ENCODE measurements at regions of chr12 and their contacts with region 1.

Region 1: DNA sequence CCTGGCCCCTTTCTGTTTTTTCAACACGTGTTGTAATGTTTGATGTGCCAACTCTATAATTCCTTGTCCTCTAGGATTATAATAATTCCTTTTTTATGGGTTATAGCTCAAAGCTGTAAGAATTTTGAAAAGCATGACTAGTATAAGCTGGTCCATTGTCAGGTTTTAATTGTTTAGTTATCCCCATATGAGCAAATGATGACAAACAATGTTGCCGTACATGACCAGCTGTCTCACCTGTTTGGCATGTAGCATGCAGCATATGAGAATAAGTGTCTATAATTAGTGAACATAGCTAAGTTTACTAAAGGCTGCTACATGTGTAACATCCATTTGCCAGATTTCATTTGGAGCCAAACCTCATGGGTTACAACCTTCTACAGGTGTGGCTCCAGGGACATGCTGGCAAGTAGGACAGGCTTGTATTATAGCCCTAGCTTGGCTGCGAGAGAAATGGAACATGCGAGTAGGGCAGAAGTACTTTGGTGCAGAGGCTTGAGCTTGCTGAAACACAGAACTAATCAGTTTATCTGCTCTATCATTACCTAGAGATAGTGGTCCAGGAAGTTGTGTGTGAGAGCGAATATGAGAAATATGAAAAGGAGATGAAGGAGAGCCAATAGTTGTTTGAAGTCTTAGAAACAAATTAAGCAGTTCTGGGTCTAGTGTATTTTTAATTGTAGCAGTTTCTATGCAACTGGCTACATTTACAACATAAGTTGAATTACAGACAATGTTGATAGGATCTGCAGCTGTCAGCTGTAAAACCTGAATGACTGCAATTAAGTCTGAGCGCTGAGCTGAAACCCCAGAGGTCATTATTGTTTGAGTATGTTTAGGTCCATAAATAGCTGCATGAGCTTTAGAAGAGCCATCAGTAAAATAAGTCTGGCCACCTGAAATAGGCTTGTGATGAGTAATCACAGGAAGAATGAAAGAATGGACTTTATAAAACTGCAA is 22.6 kb upstream of the MAPKAPK5 start:
- DNase-seq: no peak
- ATAC-seq: no peak
- H3K4me3 ChIP-seq: no peak overlapping the region
- H3K27ac ChIP-seq: no peak overlapping the region
- H3K4me1 ChIP-seq: peaks cover 0 to 3% of the 10 kb centered on the region in 2 experiments; a peak in 1 of 5 replicates
- H3K27me3 ChIP-seq: peaks cover 0 to 10% of the 10 kb centered on the region in 2 experiments; a peak in 4 of 5 replicates
- CTCF ChIP-seq: no peak
- EP300 ChIP-seq: no peak
- POLR2A ChIP-seq: no peak
- RAD21 ChIP-seq: no peak

Region 2: GRCh38 chr12:111905502-111905901 is 86.0 kb after region 1 on chr12:
- CTCF ChIA-PET with region 1: no interaction called
- POLR2A ChIA-PET with region 1: no interaction called
- in situ Hi-C with region 1: no loop called
- intact Hi-C with region 1: loop called (anchors 10 kb)
- DNase-seq: no peak
- ATAC-seq: no peak
- H3K4me3 ChIP-seq: no peak overlapping the region
- H3K27ac ChIP-seq: no peak overlapping the region
- H3K4me1 ChIP-seq: peaks cover 0 to 3% of the 10 kb centered on the region in 2 experiments; a peak in 2 of 5 replicates
- H3K27me3 ChIP-seq: no peaks in the 10 kb centered on the region
- CTCF ChIP-seq: no peak
- EP300 ChIP-seq: no peak
- POLR2A ChIP-seq: no peak
- RAD21 ChIP-seq: no peak

Region 3: GRCh38 chr12:111942557-111942956 is 123.1 kb after region 1 on chr12:
- CTCF ChIA-PET with region 1: no interaction called
- POLR2A ChIA-PET with region 1: no interaction called
- in situ Hi-C with region 1: no loop called
- intact Hi-C with region 1: loop called (anchors 5 kb)
- DNase-seq: no peak
- ATAC-seq: no peak
- H3K4me3 ChIP-seq: no peak overlapping the region
- H3K27ac ChIP-seq: no peak overlapping the region
- H3K4me1 ChIP-seq: peaks cover 0 to 3% of the 10 kb centered on the region in 2 experiments; a peak in 1 of 5 replicates
- H3K27me3 ChIP-seq: no peaks in the 10 kb centered on the region
- CTCF ChIP-seq: no peak
- EP300 ChIP-seq: no peak
- POLR2A ChIP-seq: no peak
- RAD21 ChIP-seq: no peak